ENCODE measurements at regions of chr10 and their contacts with region 1.

Region 1: DNA sequence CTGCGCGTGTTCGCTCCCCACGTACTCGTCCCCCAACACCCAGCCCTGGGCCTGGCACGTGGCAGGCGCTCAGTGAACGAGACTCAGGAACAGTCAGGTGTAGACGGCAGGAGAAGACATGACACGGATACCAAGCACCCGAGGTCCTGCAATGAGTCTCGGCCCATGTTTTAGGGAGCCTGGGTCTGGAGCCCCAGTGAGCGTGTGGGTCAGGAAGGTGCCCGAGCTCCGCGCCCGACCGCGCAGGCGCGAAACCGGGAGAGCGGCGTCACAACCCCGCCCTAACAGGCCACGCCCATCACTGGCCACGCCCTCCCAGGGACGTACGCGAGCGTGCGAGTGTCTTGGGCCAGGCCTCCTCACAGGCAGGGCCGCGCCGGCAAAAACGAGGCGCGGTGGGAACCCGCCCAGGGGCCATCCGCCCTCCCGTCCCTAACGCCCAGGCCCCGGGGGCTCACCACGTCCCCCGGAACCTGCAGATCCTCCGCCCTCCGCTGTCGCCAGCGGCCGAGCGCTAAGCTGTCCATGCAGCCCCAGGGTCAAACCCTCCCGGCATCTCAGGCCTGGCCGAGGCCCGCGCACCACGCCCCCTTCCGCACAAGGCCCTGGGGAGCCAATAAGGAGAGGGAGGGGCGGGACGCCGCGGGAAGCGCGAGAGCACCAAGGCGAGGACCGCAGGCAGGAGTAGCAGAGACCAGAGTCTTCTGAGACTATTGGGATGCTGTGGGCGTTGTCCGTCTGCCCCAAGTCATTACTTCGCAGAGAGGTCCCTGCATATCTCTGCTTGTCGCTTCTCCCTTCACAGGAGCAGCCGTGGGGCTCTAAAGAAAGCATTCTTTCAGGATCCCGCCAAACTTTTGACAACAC is at the start of gene C10orf143:
- DNase-seq: peak; percentile 97
- H3K4me3 ChIP-seq: peak within 1 kb of the TSS; percentile 76 to 95
- H3K27ac ChIP-seq: peak within 1 kb of the TSS; percentile 93 to 95
- H3K4me1 ChIP-seq: peaks cover 3 to 12% of the 10 kb centered on the region in 2 experiments; a peak in 1 of 4 replicates
- H3K27me3 ChIP-seq: no peaks in the 10 kb centered on the region
- CTCF ChIP-seq: no peak
- EP300 ChIP-seq: no peak
- RAD21 ChIP-seq: no peak
- polyA plus RNA-seq, gene C10orf143: 1.4 and 2.2 TPM in 2 replicates

Region 2: DNA sequence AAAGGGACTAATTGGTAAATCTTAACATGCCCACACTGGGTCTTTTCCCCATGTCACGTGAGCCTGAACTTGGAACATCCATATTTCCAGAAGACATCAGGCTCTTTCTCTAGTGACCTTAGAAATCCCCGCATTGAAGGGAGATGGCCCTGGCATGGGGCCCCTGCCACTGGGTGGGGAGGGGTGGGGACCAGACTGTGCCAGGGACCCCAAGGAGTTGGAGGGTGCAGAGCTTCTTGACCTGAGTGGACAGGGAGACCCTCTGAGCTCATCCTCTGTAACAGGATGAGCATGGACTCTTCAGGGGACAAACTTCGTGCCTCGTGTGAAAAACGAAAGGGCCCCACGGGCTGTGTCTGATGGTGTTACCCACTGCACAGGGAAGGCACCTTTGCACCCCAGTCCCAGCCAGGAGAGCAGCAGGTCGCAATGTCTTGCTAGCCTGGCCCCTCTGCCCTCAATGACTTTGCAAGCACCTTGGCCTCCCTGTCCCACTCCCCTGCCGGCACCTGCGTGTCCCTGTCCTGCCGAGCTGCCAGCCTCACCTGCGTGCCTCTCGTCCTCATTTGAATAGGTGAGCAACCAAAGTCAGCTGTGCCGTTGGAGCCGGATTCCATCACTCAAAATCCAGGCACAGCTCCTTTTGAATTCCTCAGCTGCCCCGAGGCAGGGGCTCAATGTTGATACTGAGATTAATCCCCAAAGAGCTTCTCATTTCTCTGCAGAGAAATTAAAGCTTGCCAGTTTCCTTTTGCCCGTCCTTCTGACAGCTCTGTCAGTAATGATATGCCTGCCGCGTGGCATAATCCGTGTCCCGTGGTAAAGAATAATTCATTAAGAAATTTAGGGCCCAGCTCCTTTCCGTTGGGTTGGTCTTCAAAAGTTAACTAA is 381.3 kb before region 1 on chr10:
- CTCF ChIA-PET with region 1: no interaction called
- POLR2A ChIA-PET with region 1: no interaction called
- DNase-seq: no peak
- H3K4me3 ChIP-seq: no peak overlapping the region
- H3K27ac ChIP-seq: no peak overlapping the region
- H3K4me1 ChIP-seq: no peaks in the 10 kb centered on the region
- H3K27me3 ChIP-seq: no peaks in the 10 kb centered on the region
- CTCF ChIP-seq: no peak
- EP300 ChIP-seq: no peak
- RAD21 ChIP-seq: no peak

Region 3: GRCh38 chr10:130121486-130122079 is 11.1 kb after region 1 on chr10:
- CTCF ChIA-PET with region 1: interaction called, 38 read pairs
- POLR2A ChIA-PET with region 1: interaction called, 4 read pairs
- DNase-seq: peak; percentile 49
- H3K4me3 ChIP-seq: no peak overlapping the region
- H3K27ac ChIP-seq: no peak overlapping the region
- H3K4me1 ChIP-seq: peaks cover 0 to 10% of the 10 kb centered on the region in 2 experiments; a peak in 1 of 4 replicates
- H3K27me3 ChIP-seq: no peaks in the 10 kb centered on the region
- CTCF ChIP-seq: no peak
- EP300 ChIP-seq: no peak
- RAD21 ChIP-seq: no peak

Region 4: DNA sequence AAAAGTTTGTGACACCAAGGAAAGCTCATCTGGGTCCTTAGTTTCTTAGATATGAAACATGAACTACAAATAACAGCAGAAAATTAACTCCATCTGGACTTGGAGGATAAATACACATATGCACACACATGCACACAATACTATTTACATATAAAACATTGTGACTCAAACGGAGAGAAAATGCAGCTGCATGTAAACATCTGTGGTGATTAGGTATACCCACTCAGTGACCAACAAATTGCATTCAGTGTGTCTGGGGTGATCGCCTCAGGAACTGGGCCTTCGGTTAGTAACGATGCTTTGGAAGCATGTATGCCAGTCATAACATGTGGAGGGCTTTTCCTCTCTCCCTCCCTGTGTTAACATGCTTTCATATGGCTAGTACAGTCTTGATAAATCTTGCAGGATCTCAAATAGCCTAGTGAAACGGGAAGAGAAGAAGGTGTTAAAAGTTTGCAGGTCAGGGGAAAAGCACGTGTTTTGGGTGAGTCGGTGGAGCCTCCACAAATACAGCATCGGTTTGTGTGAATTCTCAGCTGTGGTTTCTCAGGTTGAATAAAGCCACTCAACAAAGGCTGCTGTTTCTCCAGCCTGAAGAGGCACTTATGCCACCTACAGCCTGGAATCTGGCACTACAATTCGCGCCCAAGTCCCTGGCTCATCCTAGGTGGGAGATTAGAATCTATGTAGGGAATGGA is 17.0 kb after region 1 on chr10:
- CTCF ChIA-PET with region 1: interaction called, 38 read pairs
- POLR2A ChIA-PET with region 1: interaction called, 9 read pairs
- DNase-seq: peak; percentile 91
- H3K4me3 ChIP-seq: peak overlapping the region in 1 of 2 experiments; percentile 1; a peak in 1 of 4 replicates
- H3K27ac ChIP-seq: no peak overlapping the region
- H3K4me1 ChIP-seq: peaks cover 4 to 5% of the 10 kb centered on the region in 2 experiments; a peak in 1 of 4 replicates
- H3K27me3 ChIP-seq: no peaks in the 10 kb centered on the region
- CTCF ChIP-seq: peak; percentile 85
- EP300 ChIP-seq: no peak
- RAD21 ChIP-seq: peak; percentile 80

Region 5: GRCh38 chr10:130136226-130137089 is 26.0 kb after region 1 on chr10 and contains the start of gene GLRX3:
- CTCF ChIA-PET with region 1: interaction called, 14 read pairs
- POLR2A ChIA-PET with region 1: interaction called, 49 read pairs
- DNase-seq: peak; percentile 98
- H3K4me3 ChIP-seq: peak within 1 kb of the TSS; percentile 80 to 81
- H3K27ac ChIP-seq: peak within 1 kb of the TSS; percentile 66 to 72
- H3K4me1 ChIP-seq: peaks cover 9 to 16% of the 10 kb centered on the region in 2 experiments; a peak in 1 of 4 replicates
- H3K27me3 ChIP-seq: no peaks in the 10 kb centered on the region
- CTCF ChIP-seq: no peak
- EP300 ChIP-seq: no peak
- RAD21 ChIP-seq: no peak
- polyA plus RNA-seq, gene GLRX3: 88.1 and 93.8 TPM in 2 replicates

Region 6: GRCh38 chr10:130146042-130146441 is 35.6 kb after region 1 on chr10:
- CTCF ChIA-PET with region 1: interaction called, 11 read pairs
- POLR2A ChIA-PET with region 1: no interaction called
- DNase-seq: no peak
- H3K4me3 ChIP-seq: no peak overlapping the region
- H3K27ac ChIP-seq: no peak overlapping the region
- H3K4me1 ChIP-seq: no peaks in the 10 kb centered on the region; a peak in 1 of 4 replicates
- H3K27me3 ChIP-seq: no peaks in the 10 kb centered on the region
- CTCF ChIP-seq: no peak
- EP300 ChIP-seq: no peak
- RAD21 ChIP-seq: no peak

Measured in SK-N-SH (cell line).